ENCODE measurements at regions of chr17 and their contacts with region 1.

Region 1: DNA sequence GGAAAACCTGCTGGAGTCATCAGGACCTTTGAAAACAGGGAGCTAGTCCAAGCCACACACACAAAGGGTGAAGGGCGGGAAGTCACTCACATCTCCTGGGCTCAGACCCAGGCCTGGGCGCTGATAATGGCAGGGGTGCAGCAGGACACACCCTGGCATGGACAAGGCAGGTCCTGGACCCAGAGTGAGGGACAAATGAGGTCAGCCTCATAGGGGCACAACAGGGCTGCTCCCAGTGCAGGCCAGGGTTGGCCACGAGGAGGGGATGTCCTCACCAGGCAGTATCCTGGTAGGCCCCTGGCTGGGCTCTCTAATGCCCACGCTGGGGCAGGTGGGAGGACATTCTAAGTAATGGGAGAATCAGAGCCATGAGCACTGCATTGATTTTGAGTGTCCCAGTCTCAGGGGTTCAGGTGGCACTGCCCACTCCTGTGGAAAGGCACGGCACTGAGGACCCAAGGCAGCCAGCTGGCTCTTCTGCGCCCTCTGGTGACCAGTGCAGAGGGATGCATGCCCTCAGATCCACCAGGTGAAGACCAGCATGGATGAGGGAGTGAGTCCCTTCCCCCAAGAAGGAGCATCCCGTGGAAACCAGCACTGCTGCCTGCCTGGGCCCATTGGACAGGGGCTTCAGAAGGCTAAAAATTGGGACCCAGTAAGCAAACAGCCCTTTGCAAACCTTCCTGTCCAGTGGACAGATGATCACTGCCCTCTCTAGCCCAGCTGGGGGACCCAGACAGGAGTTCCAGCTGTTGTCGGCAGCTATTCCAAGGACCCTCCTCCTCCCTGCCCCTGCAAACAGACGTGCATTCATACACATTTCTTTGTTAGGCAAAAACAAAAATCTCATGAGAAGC is 23.4 kb upstream of the SREBF1 start:
- DNase-seq: peak; percentile 79
- ATAC-seq: peak; percentile 89
- H3K4me3 Mint-ChIP-seq: no peak overlapping the region
- H3K27ac Mint-ChIP-seq: no peak overlapping the region
- H3K4me1 Mint-ChIP-seq: peaks cover 43% of the 10 kb centered on the region
- H3K27me3 Mint-ChIP-seq: no peaks in the 10 kb centered on the region

Region 2: DNA sequence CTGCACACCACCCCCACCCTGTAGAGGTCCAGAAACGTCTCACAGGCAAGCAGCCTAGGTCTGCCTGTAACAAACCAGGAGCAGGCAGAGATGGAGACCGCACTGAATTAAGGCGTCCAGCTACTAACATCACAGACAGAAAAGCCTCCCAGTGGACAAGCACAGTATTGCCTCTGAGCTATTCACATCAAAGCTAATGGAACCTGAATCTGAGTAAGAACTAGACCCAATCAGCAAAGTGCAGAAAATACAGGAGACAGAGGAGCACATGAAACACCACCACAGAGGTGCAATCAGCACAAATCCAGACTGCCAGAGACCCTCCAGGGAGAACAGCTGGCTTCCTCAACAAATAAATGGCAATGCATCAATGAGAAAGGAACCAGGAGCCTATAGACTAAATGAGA is 246.4 kb before region 1 on chr17:
- CTCF ChIA-PET with region 1: no interaction called
- POLR2A ChIA-PET with region 1: no interaction called
- DNase-seq: peak; percentile 71
- ATAC-seq: peak; percentile 96
- H3K4me3 Mint-ChIP-seq: no peak overlapping the region
- H3K27ac Mint-ChIP-seq: no peak overlapping the region
- H3K4me1 Mint-ChIP-seq: no peaks in the 10 kb centered on the region
- H3K27me3 Mint-ChIP-seq: no peaks in the 10 kb centered on the region

Region 3: DNA sequence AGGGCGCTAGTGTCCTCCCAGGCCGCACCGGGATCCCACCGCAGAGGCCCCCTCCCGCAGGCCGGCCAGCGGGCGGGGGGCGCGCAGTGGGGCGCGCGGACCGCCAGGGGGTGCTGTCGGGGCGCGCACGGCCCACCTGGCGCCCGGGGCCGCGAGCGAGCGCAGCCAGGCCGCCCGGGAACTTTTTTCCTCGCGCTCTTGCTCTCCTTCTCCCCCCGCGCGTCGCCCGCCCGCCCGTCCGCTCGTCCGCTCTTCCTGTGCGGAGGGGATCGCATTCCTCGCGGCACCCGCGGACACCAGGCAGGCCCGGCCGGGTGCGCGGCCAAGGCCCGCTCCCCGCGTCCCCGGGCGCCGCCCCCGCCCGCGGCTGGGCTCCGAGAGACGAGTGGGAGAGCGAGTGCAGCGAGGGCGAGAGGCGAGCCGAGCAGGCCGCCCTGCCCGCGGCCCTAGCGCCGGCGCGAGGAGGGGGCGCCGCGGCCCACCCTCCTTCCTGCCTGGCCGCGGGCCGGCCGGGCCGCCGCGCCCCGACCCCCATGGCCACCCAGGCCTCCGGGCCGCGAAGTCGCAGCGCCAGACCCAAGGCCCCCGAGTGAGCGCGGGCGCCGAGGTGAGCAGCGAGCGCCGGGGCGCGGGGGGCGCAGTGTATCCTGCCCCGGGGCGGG is 178.8 kb before region 1 on chr17 and contains the start of gene RAI1:
- CTCF ChIA-PET with region 1: interaction called, 15 read pairs
- POLR2A ChIA-PET with region 1: interaction called, 3 read pairs
- DNase-seq: peak; percentile 76
- ATAC-seq: peak; percentile 69
- H3K4me3 Mint-ChIP-seq: peak within 1 kb of the TSS; percentile 87
- H3K27ac Mint-ChIP-seq: peak within 1 kb of the TSS; percentile 92
- H3K4me1 Mint-ChIP-seq: peaks cover 48% of the 10 kb centered on the region
- H3K27me3 Mint-ChIP-seq: peaks cover 8% of the 10 kb centered on the region
- total RNA-seq, gene RAI1: 24.4 to 24.6 TPM

Region 4: GRCh38 chr17:17812211-17813057 is 47.7 kb before region 1 on chr17:
- CTCF ChIA-PET with region 1: interaction called, 43 read pairs
- POLR2A ChIA-PET with region 1: interaction called, 6 read pairs
- DNase-seq: peak; percentile 66
- ATAC-seq: peak; percentile 44
- H3K4me3 Mint-ChIP-seq: no peak overlapping the region
- H3K27ac Mint-ChIP-seq: no peak overlapping the region
- H3K4me1 Mint-ChIP-seq: peaks cover 34% of the 10 kb centered on the region
- H3K27me3 Mint-ChIP-seq: no peaks in the 10 kb centered on the region

Region 5: DNA sequence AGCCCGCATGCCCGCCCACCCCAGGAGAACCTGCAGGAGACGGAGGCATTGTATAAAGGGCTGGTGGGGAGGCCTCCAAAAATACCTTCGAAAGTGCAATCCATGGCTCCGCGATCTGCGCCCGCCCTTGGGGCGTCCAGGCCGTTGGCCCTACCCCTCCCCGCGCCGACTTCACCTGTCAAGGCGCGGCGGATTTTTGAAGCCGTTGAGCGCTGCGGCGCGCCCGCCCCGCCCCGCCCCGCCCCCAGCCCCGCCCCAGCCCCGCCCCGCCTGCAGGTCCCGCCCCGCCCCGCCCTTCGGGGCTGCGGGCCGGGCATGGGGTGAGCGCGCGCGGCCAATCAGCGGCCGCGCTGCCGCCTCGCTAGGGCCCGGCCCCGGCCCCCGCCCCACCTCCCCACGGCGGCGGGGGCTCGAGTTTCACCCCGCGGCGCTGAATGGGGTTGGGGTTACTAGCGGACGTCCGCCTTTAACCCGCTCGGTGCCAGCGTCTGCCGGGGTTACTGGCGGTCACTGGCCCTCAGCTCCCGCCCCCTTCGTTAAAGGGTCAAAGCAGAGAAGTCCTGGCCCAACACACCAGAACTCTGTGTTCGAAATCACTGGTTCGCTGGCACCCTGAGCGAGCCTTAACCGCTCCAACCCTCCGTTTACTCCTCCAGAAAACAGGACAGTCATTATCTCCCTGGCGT is 36.6 kb before region 1 on chr17:
- CTCF ChIA-PET with region 1: interaction called, 16 read pairs
- POLR2A ChIA-PET with region 1: interaction called, 8 read pairs
- DNase-seq: peak; percentile 90
- ATAC-seq: peak; percentile 84
- H3K4me3 Mint-ChIP-seq: peak overlapping the region; percentile 83
- H3K27ac Mint-ChIP-seq: peak overlapping the region; percentile 91
- H3K4me1 Mint-ChIP-seq: peaks cover 92% of the 10 kb centered on the region
- H3K27me3 Mint-ChIP-seq: no peaks in the 10 kb centered on the region

Region 6: GRCh38 chr17:17836250-17836817 is 23.8 kb before region 1 on chr17:
- CTCF ChIA-PET with region 1: interaction called, 14 read pairs
- POLR2A ChIA-PET with region 1: interaction called, 45 read pairs
- DNase-seq: peak; percentile 98
- ATAC-seq: peak; percentile 73
- H3K4me3 Mint-ChIP-seq: peak overlapping the region; percentile 96
- H3K27ac Mint-ChIP-seq: peak overlapping the region; percentile 93
- H3K4me1 Mint-ChIP-seq: peaks cover 76% of the 10 kb centered on the region
- H3K27me3 Mint-ChIP-seq: no peaks in the 10 kb centered on the region

Region 7: DNA sequence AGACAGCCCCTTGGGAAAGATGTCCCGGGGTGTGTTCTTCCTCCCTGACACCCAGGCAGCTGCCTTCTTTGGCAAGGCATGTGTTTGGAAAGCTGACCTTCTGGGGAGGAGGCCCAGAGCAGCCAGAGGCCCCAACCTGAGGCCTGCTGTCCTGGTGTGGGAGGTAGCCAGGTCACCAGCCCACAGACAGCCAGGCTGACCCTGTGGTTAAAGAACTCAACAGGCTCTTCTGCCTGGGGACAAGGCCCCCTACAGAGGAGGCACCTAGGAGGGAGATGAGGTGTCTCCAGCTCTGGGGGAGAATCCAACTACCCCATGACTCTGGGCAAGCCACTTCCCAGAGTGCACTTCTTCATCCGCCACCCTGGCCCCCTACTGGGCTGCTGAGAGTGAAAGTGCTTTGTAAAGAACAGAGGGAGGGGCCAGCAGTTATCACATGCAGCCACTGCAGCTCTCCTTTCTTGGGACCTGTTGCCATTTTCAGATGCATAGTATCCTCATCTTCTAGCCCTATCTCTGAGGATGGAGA is 10.2 kb before region 1 on chr17:
- CTCF ChIA-PET with region 1: interaction called, 19 read pairs
- POLR2A ChIA-PET with region 1: no interaction called
- DNase-seq: peak; percentile 91
- ATAC-seq: peak; percentile 66
- H3K4me3 Mint-ChIP-seq: peak overlapping the region; percentile 50
- H3K27ac Mint-ChIP-seq: peak overlapping the region; percentile 92
- H3K4me1 Mint-ChIP-seq: peaks cover 84% of the 10 kb centered on the region
- H3K27me3 Mint-ChIP-seq: no peaks in the 10 kb centered on the region

Measured in activated CD8-positive, alpha-beta T cell treated with anti-CD3 and anti-CD28 coated beads, Interleukin-2, amount 10 ng/mL, durations not matched to agents 7 days and 5 days (primary cell).